Naive thymus-derived CD4-positive, alpha-beta T cell (primary cell): ENCODE measurements at regions of chr4 and their contacts with region 1.

Region 1: DNA sequence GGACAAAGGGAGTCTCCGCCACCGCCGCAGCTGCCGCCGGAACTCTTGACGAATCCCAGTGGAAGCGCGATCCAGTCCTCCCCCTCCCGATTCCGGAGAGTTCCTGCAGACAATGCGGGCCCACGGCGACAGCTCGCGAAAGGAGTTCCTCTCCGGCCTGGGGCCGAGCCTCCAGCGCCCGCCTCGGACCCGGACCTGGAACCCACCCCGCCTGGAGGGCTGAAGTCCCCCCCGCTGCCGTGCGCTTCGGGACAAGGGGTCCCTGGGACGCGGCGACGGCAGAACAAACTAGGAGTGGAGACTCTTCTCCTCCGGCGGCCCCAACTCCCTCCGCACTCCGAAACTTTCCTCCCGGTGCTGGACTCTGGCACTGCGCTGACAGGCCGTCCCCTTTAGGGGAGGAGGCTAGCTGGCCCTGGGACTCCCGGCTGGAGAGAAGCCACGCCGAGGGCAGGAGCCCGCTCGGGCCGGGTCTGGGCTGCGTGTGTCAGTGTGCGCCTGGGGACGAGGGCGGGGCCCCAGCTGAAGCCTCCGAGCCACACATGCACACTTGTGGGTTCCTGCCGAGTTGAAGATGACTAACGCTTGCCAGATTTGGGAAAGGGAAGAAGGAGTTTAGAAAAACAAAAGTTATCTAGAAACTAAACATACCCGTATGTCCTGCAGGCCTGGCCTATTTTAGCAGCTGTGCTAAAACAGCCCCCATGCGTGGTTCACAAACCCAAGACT is at the start of gene ANTXR2:
- DNase-seq: peak; percentile 49 to 75 (median 56)
- ATAC-seq: peak; percentile 85
- H3K4me3 ChIP-seq: peak within 1 kb of the TSS; percentile 76
- H3K4me3 Mint-ChIP-seq: peak within 1 kb of the TSS; percentile 82 to 99 (median 96)
- H3K27ac ChIP-seq: peak within 1 kb of the TSS; percentile 86
- H3K27ac Mint-ChIP-seq: peak within 1 kb of the TSS; percentile 88 to 98 (median 96)
- H3K4me1 ChIP-seq: peaks cover 23 to 29% of the 10 kb centered on the region in 2 donors
- H3K4me1 Mint-ChIP-seq: peaks cover 25 to 76% (median 62%) of the 10 kb centered on the region in 7 donors
- H3K27me3 ChIP-seq: no peaks in the 10 kb centered on the region
- H3K27me3 Mint-ChIP-seq: peaks cover 0 to 3% (median 0%) of the 10 kb centered on the region in 5 donors
- total RNA-seq, gene ANTXR2: 20.3 to 69.8 (median 50.0) TPM

Region 2: DNA sequence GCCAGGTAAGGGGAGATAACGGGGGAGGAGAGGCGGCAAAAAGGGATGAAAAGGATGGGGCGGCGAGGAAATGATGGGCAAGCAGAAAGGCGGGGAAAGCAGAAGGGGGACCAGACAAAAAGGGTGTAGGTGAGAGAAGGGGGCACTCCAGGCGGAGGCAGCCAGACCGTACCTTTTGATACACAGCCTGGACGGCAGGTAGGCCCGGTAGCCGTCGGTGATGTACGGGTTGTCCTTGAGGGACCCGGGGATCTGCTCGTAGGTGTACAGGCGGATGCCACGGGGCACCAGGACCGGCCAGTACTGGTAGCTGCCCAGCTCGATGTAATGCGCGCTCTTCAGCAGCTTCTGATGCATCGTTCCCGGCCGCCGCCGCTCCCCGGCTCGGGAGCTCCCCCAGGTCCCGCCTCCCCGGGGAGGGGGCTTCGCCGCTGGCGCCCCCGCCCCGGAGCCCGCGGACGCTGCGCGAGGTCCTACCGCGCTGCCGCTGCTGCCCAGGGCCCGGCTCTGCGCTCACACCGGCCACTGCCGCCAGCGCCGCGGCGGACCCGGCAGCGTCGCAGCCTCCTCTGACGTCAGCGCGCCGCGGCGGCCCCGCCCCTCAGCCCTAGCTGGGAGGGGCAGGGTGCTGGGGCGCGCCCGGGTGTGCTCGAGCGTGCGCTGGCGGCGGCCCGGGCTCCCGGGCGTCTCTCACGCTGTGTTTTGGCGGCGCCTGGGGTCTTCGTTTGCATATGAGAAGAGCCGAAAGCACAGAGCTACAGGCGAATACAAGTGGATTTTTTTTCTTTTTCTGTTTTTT is 1133.8 kb before region 1 on chr4 and contains the start of gene PAQR3:
- CTCF ChIA-PET with region 1: no interaction called
- POLR2A ChIA-PET with region 1: no interaction called
- intact Hi-C with region 1: loop called in 1 of 2 experiments (anchors 2 kb)
- DNase-seq: peak; percentile 70 to 91 (median 86)
- ATAC-seq: peak; percentile 98
- H3K4me3 ChIP-seq: peak within 1 kb of the TSS; percentile 86
- H3K4me3 Mint-ChIP-seq: peak within 1 kb of the TSS; percentile 92 to 100 (median 98)
- H3K27ac ChIP-seq: peak within 1 kb of the TSS; percentile 82
- H3K27ac Mint-ChIP-seq: peak within 1 kb of the TSS; percentile 82 to 97 (median 92)
- H3K4me1 ChIP-seq: peaks cover 5 to 14% of the 10 kb centered on the region in 2 donors
- H3K4me1 Mint-ChIP-seq: peaks cover 23 to 54% (median 39%) of the 10 kb centered on the region in 7 donors
- H3K27me3 ChIP-seq: no peaks in the 10 kb centered on the region
- H3K27me3 Mint-ChIP-seq: peaks cover 8 to 18% (median 11%) of the 10 kb centered on the region in 5 donors
- total RNA-seq, gene PAQR3: 13.1 to 24.3 (median 15.8) TPM

Region 3: GRCh38 chr4:80007745-80008149 is 65.2 kb before region 1 on chr4:
- CTCF ChIA-PET with region 1: no interaction called
- POLR2A ChIA-PET with region 1: no interaction called
- intact Hi-C with region 1: loop called in 1 of 2 experiments (anchors 2 kb)
- DNase-seq: no peak
- ATAC-seq: no peak
- H3K4me3 ChIP-seq: no peak overlapping the region
- H3K4me3 Mint-ChIP-seq: peak overlapping the region in 1 of 10 donors; percentile 43
- H3K27ac ChIP-seq: no peak overlapping the region
- H3K27ac Mint-ChIP-seq: peak overlapping the region in 3 of 9 donors; percentile 5 to 86 (median 56)
- H3K4me1 ChIP-seq: peaks cover 12 to 22% of the 10 kb centered on the region in 2 donors
- H3K4me1 Mint-ChIP-seq: peaks cover 19 to 59% (median 44%) of the 10 kb centered on the region in 7 donors
- H3K27me3 ChIP-seq: no peaks in the 10 kb centered on the region
- H3K27me3 Mint-ChIP-seq: no peaks in the 10 kb centered on the region

Region 4: DNA sequence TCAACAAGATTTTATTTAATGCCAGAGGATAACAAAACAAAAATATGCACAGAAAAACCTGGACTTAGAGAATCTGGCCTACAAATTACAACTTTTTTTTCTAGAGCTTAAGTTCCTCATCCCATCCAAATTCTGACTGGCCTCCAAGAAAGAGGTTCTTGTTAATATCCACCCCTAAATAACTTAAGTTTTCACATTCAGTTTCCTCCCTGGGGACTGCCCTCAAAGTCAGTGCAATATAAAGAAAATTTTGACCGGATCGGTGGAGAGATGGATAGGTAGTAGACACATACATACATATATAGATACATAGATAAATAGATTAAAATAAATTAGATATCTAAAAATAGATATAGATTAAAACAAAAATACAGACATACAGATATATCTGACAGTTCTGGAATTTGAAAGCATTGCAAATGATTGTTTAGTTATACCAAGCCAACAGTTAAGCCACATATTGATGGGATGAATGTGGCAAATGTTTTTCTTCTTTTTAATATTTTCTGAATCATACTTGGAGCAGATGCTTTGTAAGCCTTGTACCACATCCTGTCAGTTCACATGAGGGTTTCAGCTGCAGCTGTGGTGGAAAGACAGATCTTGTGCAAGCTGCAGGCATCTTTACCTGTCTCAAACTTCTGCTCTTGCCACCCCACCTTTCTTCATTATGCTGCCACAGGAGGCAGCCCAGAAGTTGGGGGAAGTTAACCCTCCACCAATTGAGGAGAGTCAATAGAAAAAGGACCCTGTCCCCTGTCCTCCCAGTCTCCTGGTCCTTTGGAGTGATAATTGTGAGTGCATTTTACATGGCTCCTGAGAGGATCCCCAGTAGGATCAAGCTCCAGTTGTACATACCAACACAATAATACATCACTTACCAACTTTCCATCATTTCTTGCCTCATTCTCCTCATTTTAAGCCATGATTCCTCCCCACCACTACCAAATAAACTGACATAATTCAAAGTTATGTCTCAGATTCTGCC is 65.9 kb after region 1 on chr4:
- CTCF ChIA-PET with region 1: no interaction called
- POLR2A ChIA-PET with region 1: interaction called, 6 read pairs
- intact Hi-C with region 1: loop called in 1 of 2 experiments (anchors 1 kb)
- DNase-seq: peak in 8 of 9 donors; percentile 50 to 77 (median 64)
- ATAC-seq: peak; percentile 89
- H3K4me3 ChIP-seq: no peak overlapping the region
- H3K4me3 Mint-ChIP-seq: peak overlapping the region in 7 of 10 donors; percentile 24 to 65 (median 48)
- H3K27ac ChIP-seq: no peak overlapping the region
- H3K27ac Mint-ChIP-seq: peak overlapping the region; percentile 58 to 91 (median 84)
- H3K4me1 ChIP-seq: peaks cover 20 to 32% of the 10 kb centered on the region in 2 donors
- H3K4me1 Mint-ChIP-seq: peaks cover 30 to 71% (median 56%) of the 10 kb centered on the region in 7 donors
- H3K27me3 ChIP-seq: no peaks in the 10 kb centered on the region
- H3K27me3 Mint-ChIP-seq: no peaks in the 10 kb centered on the region

Region 5: GRCh38 chr4:80492761-80493160 is 419.9 kb after region 1 on chr4:
- CTCF ChIA-PET with region 1: no interaction called
- POLR2A ChIA-PET with region 1: no interaction called
- intact Hi-C with region 1: loop called in 1 of 2 experiments (anchors 5 kb)
- DNase-seq: peak in 7 of 9 donors; percentile 61 to 89 (median 83)
- ATAC-seq: peak; percentile 98
- H3K4me3 ChIP-seq: no peak overlapping the region
- H3K4me3 Mint-ChIP-seq: peak overlapping the region; percentile 53 to 87 (median 67)
- H3K27ac ChIP-seq: peak overlapping the region; percentile 25
- H3K27ac Mint-ChIP-seq: peak overlapping the region; percentile 92 to 99 (median 97)
- H3K4me1 ChIP-seq: peaks cover 36 to 43% of the 10 kb centered on the region in 2 donors
- H3K4me1 Mint-ChIP-seq: peaks cover 28 to 74% (median 69%) of the 10 kb centered on the region in 7 donors
- H3K27me3 ChIP-seq: no peaks in the 10 kb centered on the region
- H3K27me3 Mint-ChIP-seq: no peaks in the 10 kb centered on the region